ENCODE measurements at regions of chr1 and their contacts with region 1.

Region 1: GRCh38 chr1:118563971-118564951 is 379.2 kb upstream of the SPAG17 start:
- DNase-seq: no peak

Region 2: DNA sequence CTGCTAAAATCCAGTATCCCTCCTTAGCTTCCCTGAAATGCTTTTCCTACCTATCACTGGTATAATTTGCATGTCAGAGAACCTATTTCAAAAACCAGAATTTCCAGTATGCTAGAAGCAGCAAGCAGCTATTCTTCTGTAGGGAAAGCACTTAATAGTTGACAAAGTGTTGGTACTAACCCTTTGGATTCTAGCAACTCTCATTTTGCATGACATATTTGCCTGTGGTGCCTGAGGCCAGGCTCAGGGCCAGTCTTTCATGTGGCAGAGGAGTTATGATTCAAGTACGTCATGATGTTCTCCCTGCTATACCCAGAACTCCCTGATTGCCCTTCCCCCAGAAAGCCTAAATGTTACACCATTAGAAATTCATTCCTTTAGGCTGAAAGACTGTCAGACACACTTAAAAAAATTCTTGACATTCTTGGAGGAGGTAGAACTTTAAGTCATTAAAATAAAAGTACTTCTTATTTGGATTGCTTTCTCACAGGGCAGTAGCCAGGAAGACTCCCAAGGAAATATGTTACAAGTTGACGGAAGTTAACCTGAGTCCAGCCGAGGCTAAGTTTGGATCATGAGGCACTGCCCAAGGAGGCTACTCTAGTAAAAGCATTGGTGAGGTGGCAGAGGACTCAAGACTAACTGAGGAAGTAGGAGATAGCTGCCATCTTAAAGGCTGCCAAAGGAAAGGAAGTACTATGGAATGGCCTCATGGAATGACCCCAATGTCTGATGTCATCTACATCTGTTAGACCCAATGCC is 80.8 kb before region 1 on chr1:
- intact Hi-C with region 1: loop called in 1 of 2 experiments (anchors 5 kb)
- DNase-seq: no peak

Measured in posterior vena cava (tissue), 2 donors.